ENCODE measurements at regions of chr17 and their contacts with region 1.

Region 1: DNA sequence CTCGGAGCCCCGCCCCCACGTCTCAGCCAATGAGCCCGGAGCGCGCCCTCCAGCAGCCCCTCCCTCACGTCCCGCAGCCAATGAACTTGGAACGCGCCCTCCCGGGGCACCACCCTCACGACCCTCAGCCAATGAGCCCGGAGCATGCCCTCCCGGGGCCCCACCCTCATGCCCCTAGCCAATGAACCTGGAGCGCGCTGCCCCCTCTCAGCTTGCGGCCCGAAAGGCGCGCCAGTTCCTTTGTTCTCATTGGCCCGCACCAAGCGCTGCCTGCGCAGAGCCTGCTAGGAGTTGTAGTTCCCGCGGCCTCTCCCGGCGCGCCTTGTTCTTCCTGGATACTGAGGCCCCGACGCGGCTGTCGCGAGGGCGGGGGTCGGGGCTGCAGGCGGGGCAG is at the start of gene LRRC45:
- DNase-seq: peak; percentile 99 to 100 (median 100)
- ATAC-seq: peak; percentile 94
- H3K4me3 ChIP-seq: peak within 1 kb of the TSS; percentile 71
- H3K4me3 Mint-ChIP-seq: peak within 1 kb of the TSS; percentile 92
- H3K27ac ChIP-seq: peak within 1 kb of the TSS in 1 of 2 donors; percentile 46
- H3K27ac Mint-ChIP-seq: peak within 1 kb of the TSS; percentile 69
- H3K4me1 ChIP-seq: peaks cover 47% of the 10 kb centered on the region
- H3K4me1 Mint-ChIP-seq: peaks cover 21% of the 10 kb centered on the region
- H3K27me3 ChIP-seq: no peaks in the 10 kb centered on the region
- H3K27me3 Mint-ChIP-seq: no peaks in the 10 kb centered on the region
- CTCF ChIP-seq: no peak
- total RNA-seq, gene LRRC45: 17.7 to 17.9 TPM

Region 2: GRCh38 chr17:81948635-81949378 is 74.2 kb before region 1 on chr17:
- CTCF ChIA-PET with region 1: no interaction called
- POLR2A ChIA-PET with region 1: no interaction called
- intact Hi-C with region 1: no loop called
- DNase-seq: no peak
- ATAC-seq: no peak
- H3K4me3 ChIP-seq: no peak overlapping the region
- H3K4me3 Mint-ChIP-seq: no peak overlapping the region
- H3K27ac ChIP-seq: no peak overlapping the region
- H3K27ac Mint-ChIP-seq: no peak overlapping the region
- H3K4me1 ChIP-seq: peaks cover 8% of the 10 kb centered on the region
- H3K4me1 Mint-ChIP-seq: no peaks in the 10 kb centered on the region
- H3K27me3 ChIP-seq: no peaks in the 10 kb centered on the region
- H3K27me3 Mint-ChIP-seq: no peaks in the 10 kb centered on the region
- CTCF ChIP-seq: no peak

Region 3: DNA sequence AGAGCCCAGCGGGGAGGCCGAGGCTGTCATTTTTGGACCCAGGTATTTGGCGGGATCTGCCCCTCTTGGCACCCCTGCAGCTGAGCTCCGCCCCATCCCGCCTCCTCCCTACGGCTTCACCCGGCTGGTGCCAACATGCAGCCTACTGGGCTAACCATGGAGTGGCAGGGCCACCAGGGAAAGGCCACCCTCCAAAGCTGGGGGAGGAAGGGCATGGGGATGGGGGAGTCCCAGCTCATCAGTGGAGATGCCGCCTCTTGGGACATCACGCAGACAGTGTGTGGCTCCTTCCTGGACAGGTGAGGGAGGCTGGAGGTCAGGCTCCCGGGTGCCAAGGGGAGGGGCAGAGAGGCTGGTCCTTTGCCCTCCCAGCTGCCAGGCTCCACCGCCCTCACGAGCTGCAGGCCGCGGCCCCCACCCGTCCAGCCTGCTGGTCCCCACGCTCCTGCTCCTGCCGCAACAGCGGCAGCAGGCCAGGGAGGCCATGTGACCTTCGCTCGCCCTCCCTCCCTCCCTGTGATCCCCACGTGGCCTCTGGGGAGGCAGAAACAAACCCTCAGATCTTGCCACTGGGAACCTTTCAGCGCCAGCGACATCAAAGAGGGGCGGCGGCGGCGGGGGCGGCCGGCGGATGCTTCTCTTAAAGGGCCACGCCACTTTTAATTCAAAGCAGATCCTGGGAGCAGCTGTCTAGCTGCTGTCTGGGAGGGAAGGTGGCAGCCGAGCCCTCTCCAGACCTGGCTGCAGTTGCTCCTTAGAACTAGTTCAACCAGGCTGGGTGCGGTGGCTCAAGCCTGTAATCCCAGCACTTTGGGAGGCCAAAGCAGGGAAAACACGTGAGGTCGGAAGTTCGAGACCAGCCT is 55.2 kb before region 1 on chr17:
- CTCF ChIA-PET with region 1: interaction called, 8 read pairs
- POLR2A ChIA-PET with region 1: interaction called, 15 read pairs
- intact Hi-C with region 1: no loop called
- DNase-seq: peak; percentile 79 to 94 (median 88)
- ATAC-seq: peak; percentile 95
- H3K4me3 ChIP-seq: peak overlapping the region; percentile 51
- H3K4me3 Mint-ChIP-seq: peak overlapping the region; percentile 78
- H3K27ac ChIP-seq: peak overlapping the region in 1 of 2 donors; percentile 65
- H3K27ac Mint-ChIP-seq: peak overlapping the region; percentile 87
- H3K4me1 ChIP-seq: peaks cover 32% of the 10 kb centered on the region
- H3K4me1 Mint-ChIP-seq: peaks cover 15% of the 10 kb centered on the region
- H3K27me3 ChIP-seq: peaks cover 0 to under 1% of the 10 kb centered on the region in 2 experiments
- H3K27me3 Mint-ChIP-seq: peaks cover 5% of the 10 kb centered on the region
- CTCF ChIP-seq: no peak

Region 4: GRCh38 chr17:81977211-81978027 is 45.6 kb before region 1 on chr17 and contains the start of gene ASPSCR1:
- CTCF ChIA-PET with region 1: interaction called, 6 read pairs
- POLR2A ChIA-PET with region 1: interaction called, 9 read pairs
- intact Hi-C with region 1: loop called in 1 of 2 experiments (anchors 1 kb)
- DNase-seq: peak; percentile 81 to 96 (median 90)
- ATAC-seq: peak; percentile 88
- H3K4me3 ChIP-seq: peak within 1 kb of the TSS; percentile 68
- H3K4me3 Mint-ChIP-seq: peak within 1 kb of the TSS; percentile 99
- H3K27ac ChIP-seq: peak within 1 kb of the TSS; percentile 18 to 75
- H3K27ac Mint-ChIP-seq: peak within 1 kb of the TSS; percentile 95
- H3K4me1 ChIP-seq: peaks cover 50% of the 10 kb centered on the region
- H3K4me1 Mint-ChIP-seq: peaks cover 43% of the 10 kb centered on the region
- H3K27me3 ChIP-seq: no peaks in the 10 kb centered on the region
- H3K27me3 Mint-ChIP-seq: no peaks in the 10 kb centered on the region
- CTCF ChIP-seq: no peak
- total RNA-seq, gene ASPSCR1: 19.1 to 22.7 TPM

Measured in CD4-positive, alpha-beta T cell (primary cell).